CD4-positive, alpha-beta T cell (primary cell): ENCODE measurements at regions of chr3 and their contacts with region 1.

Region 1: DNA sequence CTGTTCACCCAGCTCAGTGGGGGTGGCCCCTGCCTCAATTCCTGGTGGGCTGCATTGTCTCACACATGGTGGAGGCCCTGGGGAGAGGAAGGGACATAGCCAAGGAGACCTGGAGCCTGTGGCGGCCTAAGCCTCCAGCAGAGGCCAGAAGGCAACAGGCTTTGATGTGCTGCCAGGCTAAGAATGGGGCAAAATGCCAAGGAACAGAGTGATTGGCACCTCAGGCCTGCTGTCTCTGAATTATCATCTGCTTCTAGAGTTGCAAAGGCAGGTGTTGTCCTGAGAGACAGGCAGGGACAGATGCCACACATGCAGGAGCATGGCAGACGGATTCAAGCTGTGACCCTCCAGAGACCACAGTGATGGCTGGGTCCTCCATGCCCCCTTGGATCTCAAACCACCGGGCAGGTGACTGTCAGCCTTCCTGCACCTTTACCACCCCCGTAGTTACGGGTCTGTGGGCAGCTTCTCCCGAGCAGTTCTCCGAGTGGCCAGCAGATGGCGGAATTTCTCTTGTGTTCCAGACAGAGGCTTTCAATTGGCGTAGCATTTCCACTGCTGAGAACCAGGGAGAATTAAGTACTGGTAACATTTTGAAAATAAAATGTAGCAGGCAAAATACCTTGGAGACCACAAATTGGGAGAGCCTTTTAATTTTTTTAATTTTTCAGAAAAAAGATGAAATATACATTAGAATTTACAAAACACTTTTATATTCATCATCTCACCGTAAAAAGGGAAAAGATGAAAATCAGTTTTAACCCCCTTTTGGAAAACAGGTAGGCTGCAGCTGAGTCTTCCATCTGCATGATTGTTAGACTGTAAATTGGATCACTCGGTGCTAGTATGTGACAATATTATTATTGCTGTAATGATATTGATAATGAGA is 525.5 kb upstream of the CFAP20DC start:
- DNase-seq: peak; percentile 77 to 94 (median 86)
- ATAC-seq: peak; percentile 87
- H3K4me3 ChIP-seq: no peak overlapping the region
- H3K4me3 Mint-ChIP-seq: no peak overlapping the region
- H3K27ac ChIP-seq: no peak overlapping the region
- H3K27ac Mint-ChIP-seq: no peak overlapping the region
- H3K4me1 ChIP-seq: peaks cover 5% of the 10 kb centered on the region
- H3K4me1 Mint-ChIP-seq: peaks cover 8% of the 10 kb centered on the region
- H3K27me3 ChIP-seq: no peaks in the 10 kb centered on the region
- H3K27me3 Mint-ChIP-seq: no peaks in the 10 kb centered on the region
- CTCF ChIP-seq: peak; percentile 93

Region 2: GRCh38 chr3:58868097-58868779 is 707.1 kb before region 1 on chr3:
- CTCF ChIA-PET with region 1: no interaction called
- POLR2A ChIA-PET with region 1: no interaction called
- intact Hi-C with region 1: no loop called
- DNase-seq: no peak
- ATAC-seq: no peak
- H3K4me3 ChIP-seq: no peak overlapping the region
- H3K4me3 Mint-ChIP-seq: no peak overlapping the region
- H3K27ac ChIP-seq: no peak overlapping the region
- H3K27ac Mint-ChIP-seq: no peak overlapping the region
- H3K4me1 ChIP-seq: no peaks in the 10 kb centered on the region
- H3K4me1 Mint-ChIP-seq: no peaks in the 10 kb centered on the region
- H3K27me3 ChIP-seq: no peaks in the 10 kb centered on the region
- H3K27me3 Mint-ChIP-seq: no peaks in the 10 kb centered on the region
- CTCF ChIP-seq: no peak

Region 3: DNA sequence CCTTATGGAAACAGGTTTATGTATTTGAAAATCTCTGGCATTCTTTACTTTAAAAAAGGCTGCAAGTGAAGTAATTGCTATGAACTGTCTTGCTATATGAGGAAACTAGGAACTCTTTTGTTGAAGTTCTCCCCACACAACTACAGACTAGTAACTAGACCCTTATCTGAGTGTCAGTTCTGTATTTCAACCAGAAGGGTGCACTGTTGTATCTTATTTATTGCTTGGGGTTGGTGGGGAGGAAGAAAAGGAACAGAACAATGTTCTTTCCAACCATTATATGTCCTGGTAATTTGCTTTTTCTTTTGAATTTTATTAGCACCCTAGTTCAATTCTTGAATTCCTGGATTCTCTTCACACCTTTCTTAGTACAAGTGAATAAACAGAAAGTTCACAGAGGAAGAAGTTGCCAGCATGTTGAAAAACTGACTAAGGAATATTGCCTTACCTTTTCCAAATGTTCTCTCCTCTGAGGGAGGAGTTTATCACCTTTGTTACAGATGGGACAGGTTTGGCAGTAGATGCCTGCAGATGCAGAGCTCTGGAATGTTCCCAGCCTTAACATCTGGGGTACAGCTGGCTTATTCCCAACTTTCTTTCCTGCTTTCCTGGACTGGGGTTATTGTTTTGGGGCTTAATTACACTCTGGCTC is 363.1 kb before region 1 on chr3:
- CTCF ChIA-PET with region 1: no interaction called
- POLR2A ChIA-PET with region 1: no interaction called
- intact Hi-C with region 1: loop called (anchors 2 kb)
- DNase-seq: peak in 3 of 14 experiments; percentile 60 to 65 (median 64)
- ATAC-seq: peak; percentile 68
- H3K4me3 ChIP-seq: no peak overlapping the region
- H3K4me3 Mint-ChIP-seq: no peak overlapping the region
- H3K27ac ChIP-seq: no peak overlapping the region
- H3K27ac Mint-ChIP-seq: no peak overlapping the region
- H3K4me1 ChIP-seq: no peaks in the 10 kb centered on the region
- H3K4me1 Mint-ChIP-seq: no peaks in the 10 kb centered on the region
- H3K27me3 ChIP-seq: peaks cover 0 to 11% of the 10 kb centered on the region in 2 experiments
- H3K27me3 Mint-ChIP-seq: peaks cover 8% of the 10 kb centered on the region
- CTCF ChIP-seq: peak; percentile 82

Region 4: GRCh38 chr3:59857589-59858346 is 282.4 kb after region 1 on chr3:
- CTCF ChIA-PET with region 1: interaction called, 3 read pairs
- POLR2A ChIA-PET with region 1: interaction called, 4 read pairs
- intact Hi-C with region 1: loop called (anchors 1 to 2 kb)
- DNase-seq: peak; percentile 57 to 87 (median 68)
- ATAC-seq: peak; percentile 95
- H3K4me3 ChIP-seq: no peak overlapping the region
- H3K4me3 Mint-ChIP-seq: peak overlapping the region; percentile 6
- H3K27ac ChIP-seq: no peak overlapping the region
- H3K27ac Mint-ChIP-seq: peak overlapping the region; percentile 17
- H3K4me1 ChIP-seq: peaks cover 2% of the 10 kb centered on the region
- H3K4me1 Mint-ChIP-seq: peaks cover 30% of the 10 kb centered on the region
- H3K27me3 ChIP-seq: no peaks in the 10 kb centered on the region
- H3K27me3 Mint-ChIP-seq: no peaks in the 10 kb centered on the region
- CTCF ChIP-seq: peak; percentile 84

Region 5: GRCh38 chr3:60169755-60170154 is 594.4 kb after region 1 on chr3:
- CTCF ChIA-PET with region 1: no interaction called
- POLR2A ChIA-PET with region 1: no interaction called
- intact Hi-C with region 1: loop called in 1 of 2 experiments (anchors 5 kb)
- DNase-seq: no peak
- ATAC-seq: no peak
- H3K4me3 ChIP-seq: no peak overlapping the region
- H3K4me3 Mint-ChIP-seq: no peak overlapping the region
- H3K27ac ChIP-seq: no peak overlapping the region
- H3K27ac Mint-ChIP-seq: no peak overlapping the region
- H3K4me1 ChIP-seq: no peaks in the 10 kb centered on the region
- H3K4me1 Mint-ChIP-seq: peaks cover 5% of the 10 kb centered on the region
- H3K27me3 ChIP-seq: no peaks in the 10 kb centered on the region
- H3K27me3 Mint-ChIP-seq: no peaks in the 10 kb centered on the region
- CTCF ChIP-seq: no peak

Region 6: DNA sequence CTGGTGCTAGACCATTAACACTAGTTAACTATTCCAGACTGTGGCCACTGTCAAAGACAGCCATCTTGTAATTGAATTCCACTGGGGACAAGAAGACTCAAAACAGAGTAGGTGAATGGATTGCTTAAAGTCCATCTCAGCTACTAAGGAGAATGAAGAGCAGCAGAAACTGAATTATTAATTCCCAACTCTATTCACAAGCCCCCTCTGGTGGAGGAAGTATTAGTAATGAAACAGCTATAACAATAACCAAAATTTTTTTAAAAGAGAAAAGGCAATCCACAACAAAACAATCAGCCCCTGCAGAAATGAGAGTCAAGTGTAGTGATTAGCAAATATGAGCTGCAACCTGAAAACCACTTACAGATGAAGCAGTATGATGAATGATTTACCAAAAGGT is 1373.1 kb after region 1 on chr3:
- CTCF ChIA-PET with region 1: no interaction called
- POLR2A ChIA-PET with region 1: no interaction called
- intact Hi-C with region 1: loop called in 1 of 2 experiments (anchors 5 kb)
- DNase-seq: peak in 1 of 14 experiments; percentile 2
- ATAC-seq: no peak
- H3K4me3 ChIP-seq: no peak overlapping the region
- H3K4me3 Mint-ChIP-seq: no peak overlapping the region
- H3K27ac ChIP-seq: no peak overlapping the region
- H3K27ac Mint-ChIP-seq: no peak overlapping the region
- H3K4me1 ChIP-seq: no peaks in the 10 kb centered on the region
- H3K4me1 Mint-ChIP-seq: no peaks in the 10 kb centered on the region
- H3K27me3 ChIP-seq: no peaks in the 10 kb centered on the region
- H3K27me3 Mint-ChIP-seq: no peaks in the 10 kb centered on the region
- CTCF ChIP-seq: no peak